ENCODE measurements at regions of chr11 and their contacts with region 1.

Region 1: GRCh38 chr11:9757809-9758636 is 94.1 kb downstream of the SWAP70 start:
- DNase-seq: peak; percentile 88 to 93
- H3K4me3 ChIP-seq: peak overlapping the region; percentile 70
- H3K4me3 Mint-ChIP-seq: peak overlapping the region; percentile 86
- H3K27ac Mint-ChIP-seq: peak overlapping the region; percentile 68
- H3K4me1 ChIP-seq: peaks cover 13% of the 10 kb centered on the region
- H3K4me1 Mint-ChIP-seq: peaks cover 32% of the 10 kb centered on the region
- H3K27me3 ChIP-seq: no peaks in the 10 kb centered on the region
- H3K27me3 Mint-ChIP-seq: no peaks in the 10 kb centered on the region
- CTCF ChIP-seq: peak; percentile 43 to 79

Region 2: DNA sequence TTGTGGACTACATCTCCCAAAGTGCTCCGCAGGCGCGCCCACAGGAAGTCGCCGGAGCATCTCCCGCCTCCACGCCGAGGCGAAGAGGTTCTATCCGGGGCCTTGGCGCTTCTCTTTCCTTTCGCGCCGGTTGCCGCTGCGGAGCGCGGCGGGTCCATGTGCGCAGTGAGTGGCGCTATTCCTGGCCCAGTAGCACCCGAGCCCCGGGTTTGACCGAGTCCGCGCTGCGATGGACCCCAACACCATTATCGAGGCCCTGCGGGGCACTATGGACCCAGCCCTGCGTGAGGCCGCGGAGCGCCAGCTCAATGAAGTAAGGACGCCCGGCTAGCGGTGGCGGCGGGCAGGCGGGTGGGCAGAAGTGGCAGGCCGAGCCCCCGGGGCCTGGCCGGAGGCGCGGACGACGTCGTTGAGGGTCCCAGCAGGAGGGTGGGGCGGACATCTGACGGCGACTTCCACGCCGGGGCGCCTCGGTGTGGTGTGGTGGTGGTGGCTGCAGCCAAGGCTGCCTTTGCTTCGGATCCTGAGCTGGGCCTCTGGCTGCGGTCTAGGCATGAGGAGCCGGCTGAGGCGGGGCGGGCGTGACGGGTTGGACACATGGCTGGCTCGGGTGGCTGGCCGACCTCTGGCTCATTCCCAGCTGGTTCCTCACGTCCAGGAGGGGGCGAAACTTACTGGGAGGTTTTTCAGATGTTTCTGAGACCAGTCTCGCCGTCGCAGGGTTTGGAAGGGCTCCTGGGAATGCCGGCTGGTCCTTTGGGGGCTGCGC is 373.3 kb before region 1 on chr11 and contains the start of gene IPO7:
- CTCF ChIA-PET with region 1: no interaction called
- POLR2A ChIA-PET with region 1: no interaction called
- intact Hi-C with region 1: no loop called
- DNase-seq: peak; percentile 92 to 93
- H3K4me3 ChIP-seq: peak within 1 kb of the TSS; percentile 90
- H3K4me3 Mint-ChIP-seq: peak within 1 kb of the TSS; percentile 94
- H3K27ac Mint-ChIP-seq: peak within 1 kb of the TSS; percentile 98
- H3K4me1 ChIP-seq: peaks cover 30% of the 10 kb centered on the region
- H3K4me1 Mint-ChIP-seq: peaks cover 29% of the 10 kb centered on the region
- H3K27me3 ChIP-seq: no peaks in the 10 kb centered on the region
- H3K27me3 Mint-ChIP-seq: no peaks in the 10 kb centered on the region
- CTCF ChIP-seq: peak; percentile 20 to 44
- total RNA-seq, gene IPO7: 196 and 199 TPM in 2 replicates

Region 3: GRCh38 chr11:9825315-9825714 is 67.3 kb after region 1 on chr11:
- CTCF ChIA-PET with region 1: interaction called, 3 read pairs
- POLR2A ChIA-PET with region 1: no interaction called
- intact Hi-C with region 1: loop called (anchors 10 kb)
- DNase-seq: no peak
- H3K4me3 ChIP-seq: no peak overlapping the region
- H3K4me3 Mint-ChIP-seq: no peak overlapping the region
- H3K27ac Mint-ChIP-seq: peak overlapping the region; percentile 45
- H3K4me1 ChIP-seq: peaks cover 41% of the 10 kb centered on the region
- H3K4me1 Mint-ChIP-seq: peaks cover 46% of the 10 kb centered on the region
- H3K27me3 ChIP-seq: no peaks in the 10 kb centered on the region
- H3K27me3 Mint-ChIP-seq: no peaks in the 10 kb centered on the region
- CTCF ChIP-seq: no peak

Region 4: DNA sequence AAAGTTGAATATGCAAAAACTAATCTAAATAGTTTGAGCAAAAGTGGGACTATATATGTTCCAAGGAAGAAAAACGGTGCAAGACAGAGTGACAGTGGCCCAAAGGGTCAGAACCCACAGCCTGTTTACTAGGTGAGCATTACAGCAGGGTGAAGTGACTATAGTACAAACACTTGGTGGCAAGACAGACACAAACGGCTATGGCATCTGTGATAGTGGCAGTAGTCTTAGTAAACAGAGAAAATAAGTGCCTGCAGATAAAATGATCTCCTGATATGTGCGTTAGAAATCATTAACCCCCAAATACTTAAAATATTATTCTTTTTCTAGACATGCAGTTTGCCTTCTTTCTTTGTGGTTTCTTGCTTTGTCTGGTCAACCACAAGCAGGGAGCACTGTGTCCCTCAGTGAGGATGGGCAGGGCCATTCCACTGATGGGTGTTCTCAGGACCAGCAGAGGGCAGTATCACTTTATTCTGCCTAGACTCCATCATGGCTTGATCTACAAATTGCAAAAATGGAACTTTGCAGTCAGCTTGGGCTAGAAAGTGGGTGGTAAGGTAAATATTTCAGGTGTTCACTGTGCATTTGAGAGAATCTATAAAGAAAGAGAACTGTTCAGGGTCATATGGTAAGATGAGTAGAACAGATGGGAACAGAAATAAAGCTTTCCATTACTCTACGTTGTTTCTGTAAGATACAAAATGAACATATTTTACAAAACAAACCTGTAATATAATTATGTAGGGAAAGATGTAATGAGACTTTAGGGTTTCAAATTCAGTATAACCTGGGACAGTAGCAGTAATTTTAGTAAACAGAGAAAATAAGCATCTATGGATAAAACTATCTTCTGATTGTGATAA is 104.1 kb after region 1 on chr11:
- CTCF ChIA-PET with region 1: interaction called, 4 read pairs
- POLR2A ChIA-PET with region 1: no interaction called
- intact Hi-C with region 1: loop called (anchors 1 kb)
- DNase-seq: peak; percentile 77 to 82
- H3K4me3 ChIP-seq: no peak overlapping the region
- H3K4me3 Mint-ChIP-seq: no peak overlapping the region
- H3K27ac Mint-ChIP-seq: no peak overlapping the region
- H3K4me1 ChIP-seq: peaks cover 60% of the 10 kb centered on the region
- H3K4me1 Mint-ChIP-seq: peaks cover 41% of the 10 kb centered on the region
- H3K27me3 ChIP-seq: no peaks in the 10 kb centered on the region
- H3K27me3 Mint-ChIP-seq: no peaks in the 10 kb centered on the region
- CTCF ChIP-seq: peak; percentile 77 to 87

Region 5: GRCh38 chr11:9972989-9973388 is 215.0 kb after region 1 on chr11:
- CTCF ChIA-PET with region 1: interaction called, 11 read pairs
- POLR2A ChIA-PET with region 1: no interaction called
- intact Hi-C with region 1: loop called (anchors 1 kb)
- DNase-seq: peak in 1 of 2 experiments; percentile 41
- H3K4me3 ChIP-seq: no peak overlapping the region
- H3K4me3 Mint-ChIP-seq: no peak overlapping the region
- H3K27ac Mint-ChIP-seq: no peak overlapping the region
- H3K4me1 ChIP-seq: peaks cover 18% of the 10 kb centered on the region
- H3K4me1 Mint-ChIP-seq: peaks cover 6% of the 10 kb centered on the region
- H3K27me3 ChIP-seq: no peaks in the 10 kb centered on the region
- H3K27me3 Mint-ChIP-seq: no peaks in the 10 kb centered on the region
- CTCF ChIP-seq: peak; percentile 62 to 82

Region 6: DNA sequence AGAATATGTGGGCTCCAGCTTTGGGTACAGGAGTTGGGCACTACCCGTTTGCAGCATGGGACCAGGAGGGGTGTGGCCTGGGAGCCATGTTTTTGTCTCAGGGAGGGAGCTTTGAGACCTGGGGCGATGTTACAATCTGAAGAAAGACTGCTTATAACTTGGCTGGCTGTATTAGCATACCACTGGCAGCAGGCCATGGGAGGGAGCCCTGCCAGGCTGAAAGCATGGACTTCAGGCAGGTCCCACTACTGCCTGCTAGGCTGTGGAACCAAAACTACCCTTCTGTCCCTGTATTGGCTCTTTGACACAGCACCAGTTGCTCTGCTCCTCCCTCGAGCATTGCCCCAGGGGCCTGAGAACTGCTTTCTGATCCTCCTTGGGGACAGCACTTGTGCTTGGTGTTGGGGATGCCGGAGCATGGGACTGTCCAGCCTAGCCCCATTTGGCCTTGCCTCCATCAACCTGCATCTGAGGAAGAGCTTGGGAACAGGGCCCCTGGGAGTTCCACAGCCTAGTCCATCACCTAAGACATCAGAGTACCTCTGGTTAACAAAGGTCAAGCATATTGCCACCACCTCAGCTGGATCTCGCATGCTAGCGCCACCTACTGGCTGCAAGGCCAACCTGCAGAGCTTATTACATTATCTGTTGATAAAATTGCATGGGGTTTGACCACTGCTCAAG is 318.6 kb after region 1 on chr11:
- CTCF ChIA-PET with region 1: no interaction called
- POLR2A ChIA-PET with region 1: no interaction called
- intact Hi-C with region 1: loop called (anchors 2 kb)
- DNase-seq: peak; percentile 57 to 63
- H3K4me3 ChIP-seq: no peak overlapping the region
- H3K4me3 Mint-ChIP-seq: no peak overlapping the region
- H3K27ac Mint-ChIP-seq: no peak overlapping the region
- H3K4me1 ChIP-seq: no peaks in the 10 kb centered on the region
- H3K4me1 Mint-ChIP-seq: peaks cover 5% of the 10 kb centered on the region
- H3K27me3 ChIP-seq: no peaks in the 10 kb centered on the region
- H3K27me3 Mint-ChIP-seq: no peaks in the 10 kb centered on the region
- CTCF ChIP-seq: peak; percentile 75 to 88

Region 7: GRCh38 chr11:10181811-10182210 is 423.8 kb after region 1 on chr11:
- CTCF ChIA-PET with region 1: interaction called, 3 read pairs
- POLR2A ChIA-PET with region 1: no interaction called
- intact Hi-C with region 1: loop called (anchors 10 kb)
- DNase-seq: no peak
- H3K4me3 ChIP-seq: no peak overlapping the region
- H3K4me3 Mint-ChIP-seq: no peak overlapping the region
- H3K27ac Mint-ChIP-seq: no peak overlapping the region
- H3K4me1 ChIP-seq: no peaks in the 10 kb centered on the region; the same call in 1 of the 2 replicates
- H3K4me1 Mint-ChIP-seq: no peaks in the 10 kb centered on the region
- H3K27me3 ChIP-seq: no peaks in the 10 kb centered on the region
- H3K27me3 Mint-ChIP-seq: no peaks in the 10 kb centered on the region
- CTCF ChIP-seq: peak; percentile 14 to 22

Region 8: GRCh38 chr11:10322830-10323792 is 565.1 kb after region 1 on chr11:
- CTCF ChIA-PET with region 1: interaction called, 3 read pairs
- POLR2A ChIA-PET with region 1: no interaction called
- intact Hi-C with region 1: loop called (anchors 1 kb)
- DNase-seq: peak; percentile 70 to 72
- H3K4me3 ChIP-seq: no peak overlapping the region
- H3K4me3 Mint-ChIP-seq: peak overlapping the region; percentile 56
- H3K27ac Mint-ChIP-seq: peak overlapping the region; percentile 90
- H3K4me1 ChIP-seq: peaks cover 65% of the 10 kb centered on the region
- H3K4me1 Mint-ChIP-seq: peaks cover 41% of the 10 kb centered on the region
- H3K27me3 ChIP-seq: no peaks in the 10 kb centered on the region
- H3K27me3 Mint-ChIP-seq: no peaks in the 10 kb centered on the region
- CTCF ChIP-seq: peak; percentile 42 to 50

Measured in Caco-2 (cell line).